ENCODE measurements at regions of chr5 and their contacts with region 1.

Region 1: DNA sequence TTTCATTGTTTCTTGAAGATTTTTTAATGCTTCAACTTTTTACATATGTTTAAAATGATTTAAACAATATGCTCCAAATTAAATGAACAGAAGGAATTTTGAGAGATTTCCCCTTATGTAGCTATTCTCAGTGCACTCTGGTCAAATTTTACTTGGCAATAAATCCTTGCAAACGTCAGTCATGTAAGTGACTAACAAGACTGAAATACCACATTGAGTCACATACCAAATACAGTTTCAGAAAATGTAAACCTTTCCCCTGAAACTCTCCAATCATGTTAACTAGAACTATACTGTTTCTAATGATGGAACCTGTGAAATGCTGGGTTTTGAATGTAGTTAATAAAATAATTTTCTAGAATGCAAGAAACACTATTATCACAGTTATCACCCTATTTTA is 29.6 kb downstream of the SAR1B start:
- DNase-seq: no peak
- ATAC-seq: no peak
- H3K4me3 ChIP-seq: no peak overlapping the region
- H3K4me3 Mint-ChIP-seq: no peak overlapping the region
- H3K27ac ChIP-seq: no peak overlapping the region
- H3K27ac Mint-ChIP-seq: no peak overlapping the region
- H3K4me1 ChIP-seq: no peaks in the 10 kb centered on the region
- H3K4me1 Mint-ChIP-seq: no peaks in the 10 kb centered on the region
- H3K27me3 ChIP-seq: no peaks in the 10 kb centered on the region
- H3K27me3 Mint-ChIP-seq: no peaks in the 10 kb centered on the region
- CTCF ChIP-seq: no peak

Region 2: GRCh38 chr5:132943362-132944022 is 1659.6 kb before region 1 on chr5:
- CTCF ChIA-PET with region 1: no interaction called
- POLR2A ChIA-PET with region 1: no interaction called
- intact Hi-C with region 1: loop called (anchors 5 kb)
- DNase-seq: no peak
- ATAC-seq: no peak
- H3K4me3 ChIP-seq: no peak overlapping the region
- H3K4me3 Mint-ChIP-seq: no peak overlapping the region
- H3K27ac ChIP-seq: no peak overlapping the region
- H3K27ac Mint-ChIP-seq: no peak overlapping the region
- H3K4me1 ChIP-seq: peaks cover 3 to 5% of the 10 kb centered on the region in 2 donors
- H3K4me1 Mint-ChIP-seq: peaks cover 40% of the 10 kb centered on the region
- H3K27me3 ChIP-seq: no peaks in the 10 kb centered on the region
- H3K27me3 Mint-ChIP-seq: no peaks in the 10 kb centered on the region
- CTCF ChIP-seq: no peak

Region 3: GRCh38 chr5:134465816-134466240 is 137.2 kb before region 1 on chr5:
- CTCF ChIA-PET with region 1: no interaction called
- POLR2A ChIA-PET with region 1: no interaction called
- intact Hi-C with region 1: no loop called
- DNase-seq: peak; percentile 65
- ATAC-seq: peak; percentile 82
- H3K4me3 ChIP-seq: peak overlapping the region; percentile 56 to 76 (median 58)
- H3K4me3 Mint-ChIP-seq: peak overlapping the region; percentile 89
- H3K27ac ChIP-seq: peak overlapping the region in 1 of 2 donors; percentile 42
- H3K27ac Mint-ChIP-seq: peak overlapping the region; percentile 87
- H3K4me1 ChIP-seq: peaks cover 26 to 36% of the 10 kb centered on the region in 2 donors
- H3K4me1 Mint-ChIP-seq: peaks cover 41% of the 10 kb centered on the region
- H3K27me3 ChIP-seq: no peaks in the 10 kb centered on the region
- H3K27me3 Mint-ChIP-seq: no peaks in the 10 kb centered on the region
- CTCF ChIP-seq: no peak

Region 4: DNA sequence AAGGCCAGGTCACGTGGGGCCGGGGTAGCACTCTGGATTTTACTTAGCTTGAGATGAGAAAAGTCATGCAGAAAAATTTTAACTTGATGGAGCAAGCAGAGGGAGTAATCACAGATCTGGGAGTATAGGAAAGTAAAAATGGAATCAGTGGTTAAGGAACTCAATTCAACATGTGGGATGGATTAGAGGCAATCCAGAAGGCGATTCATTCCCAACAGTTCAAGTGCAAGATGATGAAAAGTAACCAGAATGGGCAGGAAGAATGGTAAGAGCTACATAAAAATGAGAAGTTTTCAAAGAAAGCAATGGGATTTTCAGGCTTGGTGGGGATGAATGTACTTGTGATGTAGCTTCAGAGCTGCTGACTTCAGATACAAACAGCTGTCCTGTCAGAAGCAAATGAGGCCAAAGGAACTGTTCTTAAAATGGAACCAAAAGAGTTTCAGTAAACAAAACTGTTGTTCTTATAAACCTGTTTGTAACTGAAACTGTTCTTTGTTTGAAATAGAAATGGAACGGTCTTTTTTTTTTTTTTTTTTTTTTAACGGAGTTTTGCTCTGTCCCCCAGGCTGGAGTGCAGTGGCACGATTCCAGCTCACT is 40.0 kb after region 1 on chr5:
- CTCF ChIA-PET with region 1: no interaction called
- POLR2A ChIA-PET with region 1: no interaction called
- intact Hi-C with region 1: no loop called
- DNase-seq: no peak
- ATAC-seq: no peak
- H3K4me3 ChIP-seq: no peak overlapping the region
- H3K4me3 Mint-ChIP-seq: no peak overlapping the region
- H3K27ac ChIP-seq: no peak overlapping the region
- H3K27ac Mint-ChIP-seq: no peak overlapping the region
- H3K4me1 ChIP-seq: peaks cover 3 to 9% of the 10 kb centered on the region in 2 donors
- H3K4me1 Mint-ChIP-seq: peaks cover 6% of the 10 kb centered on the region
- H3K27me3 ChIP-seq: no peaks in the 10 kb centered on the region
- H3K27me3 Mint-ChIP-seq: no peaks in the 10 kb centered on the region
- CTCF ChIP-seq: no peak